Right cardiac atrium (tissue), 5 donors: ENCODE measurements at regions of chr20 and their contacts with region 1.

Region 1: DNA sequence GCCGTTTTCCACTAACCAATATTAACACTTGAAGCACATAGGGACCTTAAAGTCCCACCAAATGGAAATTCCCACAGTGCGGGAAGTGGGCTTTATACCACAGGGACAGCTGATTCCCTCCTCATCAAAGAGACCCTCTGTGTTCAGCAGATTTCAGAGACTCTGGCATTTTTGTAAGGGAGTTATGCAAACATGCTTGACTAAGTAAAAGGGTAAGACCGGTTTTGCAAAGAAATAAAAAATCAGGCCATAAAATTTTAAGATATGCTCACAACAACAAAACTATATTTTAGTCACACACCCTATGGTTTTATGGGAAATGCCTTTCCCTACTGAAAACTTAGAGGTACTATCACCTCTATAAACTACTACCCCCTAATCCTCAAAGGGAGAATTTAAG is 45.4 kb upstream of the SPTLC3 start:
- DNase-seq: no peak
- ATAC-seq: no peak
- H3K4me3 ChIP-seq: no peak overlapping the region
- H3K27ac ChIP-seq: no peak overlapping the region
- H3K4me1 ChIP-seq: no peaks in the 10 kb centered on the region
- H3K27me3 ChIP-seq: no peaks in the 10 kb centered on the region

Region 2: DNA sequence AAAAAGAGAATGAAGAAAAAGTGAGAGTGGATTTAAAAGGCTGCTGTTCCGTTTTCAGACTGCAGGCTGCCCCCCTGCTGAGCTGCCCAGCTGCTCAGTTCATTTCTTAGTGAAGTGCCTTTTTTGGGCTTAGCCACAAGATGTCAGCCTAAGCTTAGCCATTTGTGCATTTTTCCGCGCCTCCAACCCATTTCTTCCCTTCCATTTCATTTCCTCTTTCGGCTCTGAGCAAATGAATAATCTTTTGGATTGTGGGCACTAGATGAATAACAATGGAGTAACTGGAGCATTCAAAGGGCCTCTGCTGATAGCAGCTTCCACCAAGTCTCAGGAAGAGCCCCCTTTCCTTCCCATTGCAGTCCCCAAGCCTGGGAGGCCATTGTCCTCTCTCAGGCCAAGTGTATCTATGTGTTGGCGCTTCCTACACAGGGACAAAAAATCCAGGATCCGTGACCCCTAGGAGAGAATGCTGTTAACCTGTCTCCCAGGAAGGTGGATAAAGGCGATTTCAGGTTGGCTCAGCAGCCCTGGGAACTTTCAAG is 38.1 kb before region 1 on chr20:
- intact Hi-C with region 1: loop called in 1 of 4 experiments (anchors 5 kb)
- DNase-seq: peak; percentile 32 to 58 (median 55)
- ATAC-seq: peak; percentile 84 to 88
- H3K4me3 ChIP-seq: no peak overlapping the region
- H3K27ac ChIP-seq: no peak overlapping the region
- H3K4me1 ChIP-seq: no peaks in the 10 kb centered on the region
- H3K27me3 ChIP-seq: no peaks in the 10 kb centered on the region